Activated B cell treated with CpG ODN at 0.5 μM for 24 hours (primary cell): ENCODE measurements at regions of chr14 and their contacts with region 1.

Region 1: DNA sequence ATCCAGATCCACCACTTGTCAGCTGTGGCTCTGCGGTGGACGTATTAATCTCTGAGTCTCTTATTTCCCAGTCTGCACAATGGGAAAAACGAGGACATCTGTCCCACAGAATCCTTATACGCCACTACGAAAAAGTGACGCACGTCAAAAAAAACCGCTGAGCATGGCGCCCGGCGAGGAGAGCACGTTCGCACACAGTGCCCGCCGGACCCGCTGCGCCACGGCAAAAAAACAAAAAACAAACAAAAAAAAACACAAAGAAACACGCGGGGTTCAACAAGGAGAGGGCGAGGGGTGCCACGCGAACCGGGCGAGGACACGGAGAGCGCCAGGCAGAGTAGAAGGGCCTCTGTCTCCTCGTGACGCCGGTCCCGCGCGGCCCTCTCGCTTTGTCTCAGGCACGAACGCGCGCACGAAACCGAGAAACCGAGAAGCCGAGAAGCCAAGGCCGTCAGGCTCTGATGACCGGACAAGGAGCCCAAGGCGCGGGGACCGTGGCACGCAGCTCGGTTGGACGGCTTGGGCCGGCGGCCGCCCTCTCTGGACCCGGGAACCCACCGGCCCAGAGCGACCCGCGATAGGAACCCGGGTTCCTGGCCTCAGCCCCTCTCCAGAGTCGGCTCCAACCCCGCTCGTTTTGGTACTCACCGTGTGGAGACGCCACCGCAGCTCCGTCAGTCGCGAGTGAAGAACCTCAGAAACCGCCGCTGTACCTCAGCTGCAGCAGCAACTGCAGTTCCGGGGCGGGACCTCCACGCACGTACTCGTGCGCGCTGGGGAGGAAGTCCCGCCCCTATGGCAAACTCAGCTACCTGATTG is at the start of gene DDX24:
- DNase-seq: peak; percentile 94
- ATAC-seq: peak; percentile 96
- H3K4me3 Mint-ChIP-seq: peak within 1 kb of the TSS; percentile 100
- H3K27ac Mint-ChIP-seq: peak within 1 kb of the TSS; percentile 98
- H3K4me1 Mint-ChIP-seq: peaks cover 50% of the 10 kb centered on the region
- H3K27me3 Mint-ChIP-seq: no peaks in the 10 kb centered on the region
- CTCF ChIP-seq: no peak
- total RNA-seq, gene DDX24: 169 and 179 TPM in 2 replicates

Region 2: GRCh38 chr14:93959239-93960107 is 121.2 kb before region 1 on chr14:
- CTCF ChIA-PET with region 1: no interaction called
- POLR2A ChIA-PET with region 1: no interaction called
- intact Hi-C with region 1: loop called (anchors 2 kb)
- DNase-seq: peak; percentile 81
- ATAC-seq: peak; percentile 75
- H3K4me3 Mint-ChIP-seq: peak overlapping the region; percentile 80
- H3K27ac Mint-ChIP-seq: peak overlapping the region; percentile 93
- H3K4me1 Mint-ChIP-seq: peaks cover 95% of the 10 kb centered on the region
- H3K27me3 Mint-ChIP-seq: no peaks in the 10 kb centered on the region
- CTCF ChIP-seq: no peak

Region 3: DNA sequence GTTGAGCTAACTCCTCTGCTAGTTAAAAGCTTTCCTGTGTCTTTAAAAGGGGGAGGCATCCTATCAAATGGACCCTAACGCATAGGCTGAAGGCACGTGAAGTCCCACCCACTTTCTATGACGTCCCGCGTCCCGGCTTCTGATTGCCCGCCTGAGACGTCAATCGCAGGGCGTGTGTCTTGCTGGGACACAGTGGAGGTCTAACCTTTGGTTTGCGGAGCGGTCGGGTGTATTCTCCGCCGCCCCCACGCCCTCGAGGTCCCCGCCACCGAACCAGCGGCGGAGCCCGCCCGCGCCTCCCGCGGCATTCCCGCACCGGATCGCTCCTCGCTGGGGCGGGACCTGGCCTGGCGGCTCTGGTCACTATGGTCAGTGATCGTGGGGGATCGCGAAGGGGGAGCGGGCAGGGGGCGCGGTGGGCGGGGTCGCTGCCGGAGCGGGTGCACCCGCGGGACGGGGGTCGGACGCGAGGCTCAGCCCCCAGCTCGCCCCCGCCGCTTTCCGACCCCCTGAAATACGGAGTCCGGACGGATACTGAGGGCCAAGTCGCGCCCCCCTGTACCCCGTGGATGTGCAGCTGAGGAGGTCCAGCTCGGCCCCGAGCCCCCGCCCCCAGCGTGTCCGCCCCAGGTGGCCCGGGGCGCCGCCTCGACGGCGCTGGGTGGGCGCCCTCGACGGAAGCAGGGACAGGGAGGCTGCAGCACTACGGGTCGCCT is 54.3 kb before region 1 on chr14 and contains the start of gene OTUB2:
- CTCF ChIA-PET with region 1: no interaction called
- POLR2A ChIA-PET with region 1: interaction called, 4 read pairs
- intact Hi-C with region 1: loop called (anchors 1 kb)
- DNase-seq: peak; percentile 90
- ATAC-seq: peak; percentile 100
- H3K4me3 Mint-ChIP-seq: peak within 1 kb of the TSS; percentile 78
- H3K27ac Mint-ChIP-seq: no peak within 1 kb of the TSS
- H3K4me1 Mint-ChIP-seq: peaks cover 5% of the 10 kb centered on the region
- H3K27me3 Mint-ChIP-seq: peaks cover 29% of the 10 kb centered on the region
- CTCF ChIP-seq: no peak
- total RNA-seq, gene OTUB2: 0.12 TPM in 1 of 2 replicates, not detected in the other

Region 4: GRCh38 chr14:94129111-94129757 is 48.6 kb after region 1 on chr14 and contains the start of gene IFI27L2:
- CTCF ChIA-PET with region 1: interaction called, 4 read pairs
- POLR2A ChIA-PET with region 1: interaction called, 5 read pairs
- intact Hi-C with region 1: loop called (anchors 1 kb)
- DNase-seq: peak; percentile 41
- ATAC-seq: peak; percentile 98
- H3K4me3 Mint-ChIP-seq: peak within 1 kb of the TSS; percentile 88
- H3K27ac Mint-ChIP-seq: peak within 1 kb of the TSS; percentile 54
- H3K4me1 Mint-ChIP-seq: peaks cover 19% of the 10 kb centered on the region
- H3K27me3 Mint-ChIP-seq: peaks cover 6% of the 10 kb centered on the region
- CTCF ChIP-seq: no peak
- total RNA-seq, gene IFI27L2: 37.0 and 37.3 TPM in 2 replicates

Region 5: GRCh38 chr14:94136575-94137331 is 56.1 kb after region 1 on chr14:
- CTCF ChIA-PET with region 1: interaction called, 11 read pairs
- POLR2A ChIA-PET with region 1: no interaction called
- intact Hi-C with region 1: loop called (anchors 2 kb)
- DNase-seq: peak; percentile 72
- ATAC-seq: peak; percentile 95
- H3K4me3 Mint-ChIP-seq: no peak overlapping the region
- H3K27ac Mint-ChIP-seq: no peak overlapping the region
- H3K4me1 Mint-ChIP-seq: peaks cover 3% of the 10 kb centered on the region
- H3K27me3 Mint-ChIP-seq: peaks cover 26% of the 10 kb centered on the region
- CTCF ChIP-seq: no peak

Region 6: DNA sequence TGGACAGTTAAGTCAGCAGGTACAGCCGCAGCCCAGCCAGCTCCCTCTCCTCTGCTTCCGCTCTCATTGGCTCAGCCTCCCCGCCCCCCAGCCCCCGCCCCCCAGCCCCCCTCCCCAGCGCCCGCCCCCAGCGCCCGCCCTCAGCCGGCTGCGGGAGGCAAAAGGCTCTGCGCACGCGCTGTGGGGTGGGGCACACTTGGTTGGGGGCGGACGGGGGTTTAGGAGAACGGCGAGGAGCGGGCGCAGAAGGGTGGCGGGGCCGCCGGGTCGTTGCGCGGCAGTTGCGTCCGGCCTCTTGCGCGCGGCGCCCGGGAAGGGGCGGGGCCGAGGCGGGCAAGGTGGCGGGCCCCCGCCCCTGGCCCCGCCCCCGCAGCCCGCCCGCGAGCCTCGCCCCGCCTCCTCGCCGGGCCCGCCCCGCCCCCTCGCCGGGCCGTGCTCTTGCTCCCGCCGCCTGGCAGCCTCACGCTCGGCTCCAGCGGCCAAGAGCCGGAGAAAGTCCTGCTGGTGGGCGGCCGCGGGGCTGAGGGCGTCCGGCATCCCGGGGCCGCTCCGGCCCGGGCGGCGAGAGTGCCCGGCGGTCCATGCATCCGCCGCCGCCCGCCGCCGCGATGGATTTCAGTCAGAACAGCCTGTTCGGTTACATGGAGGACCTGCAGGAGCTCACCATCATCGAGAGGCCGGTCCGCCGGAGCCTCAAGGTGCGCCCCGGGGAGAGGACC is 93.4 kb after region 1 on chr14 and contains the start of gene PPP4R4:
- CTCF ChIA-PET with region 1: no interaction called
- POLR2A ChIA-PET with region 1: no interaction called
- intact Hi-C with region 1: loop called (anchors 2 kb)
- DNase-seq: peak; percentile 78
- ATAC-seq: peak; percentile 93
- H3K4me3 Mint-ChIP-seq: peak within 1 kb of the TSS; percentile 81
- H3K27ac Mint-ChIP-seq: no peak within 1 kb of the TSS
- H3K4me1 Mint-ChIP-seq: peaks cover 15% of the 10 kb centered on the region
- H3K27me3 Mint-ChIP-seq: peaks cover 43% of the 10 kb centered on the region
- CTCF ChIP-seq: no peak
- total RNA-seq, gene PPP4R4: 0.22 TPM in 1 of 2 replicates, not detected in the other

Region 7: GRCh38 chr14:94180655-94181271 is 100.1 kb after region 1 on chr14:
- CTCF ChIA-PET with region 1: interaction called, 3 read pairs
- POLR2A ChIA-PET with region 1: no interaction called
- intact Hi-C with region 1: loop called (anchors 2 kb)
- DNase-seq: no peak
- ATAC-seq: peak; percentile 66
- H3K4me3 Mint-ChIP-seq: no peak overlapping the region
- H3K27ac Mint-ChIP-seq: no peak overlapping the region
- H3K4me1 Mint-ChIP-seq: peaks cover 9% of the 10 kb centered on the region
- H3K27me3 Mint-ChIP-seq: peaks cover 39% of the 10 kb centered on the region
- CTCF ChIP-seq: peak; percentile 46

Region 8: DNA sequence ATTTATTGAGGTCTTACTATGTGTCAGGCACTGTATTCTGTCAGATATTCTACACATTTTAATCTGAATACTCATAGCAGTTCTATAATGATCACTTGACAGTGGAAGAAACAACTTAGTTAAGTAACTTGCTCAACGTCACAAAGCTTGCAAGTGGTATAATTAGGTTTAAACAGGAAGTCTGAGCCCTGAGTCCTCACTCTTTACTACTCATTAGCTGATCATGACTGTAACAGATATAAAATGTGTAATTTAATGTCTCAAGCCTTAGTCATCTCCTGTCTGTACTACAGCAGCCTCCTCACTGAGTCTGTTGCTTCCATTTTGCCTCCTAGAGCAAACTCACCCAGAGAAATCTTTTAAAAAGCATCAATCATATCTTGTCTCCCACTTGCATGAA is 132.3 kb after region 1 on chr14:
- CTCF ChIA-PET with region 1: no interaction called
- POLR2A ChIA-PET with region 1: no interaction called
- intact Hi-C with region 1: no loop called
- DNase-seq: no peak
- ATAC-seq: no peak
- H3K4me3 Mint-ChIP-seq: no peak overlapping the region
- H3K27ac Mint-ChIP-seq: no peak overlapping the region
- H3K4me1 Mint-ChIP-seq: no peaks in the 10 kb centered on the region
- H3K27me3 Mint-ChIP-seq: peaks cover 7% of the 10 kb centered on the region
- CTCF ChIP-seq: no peak